T-cell (primary cell): ENCODE measurements at regions of chr12 and their contacts with region 1.

Region 1: DNA sequence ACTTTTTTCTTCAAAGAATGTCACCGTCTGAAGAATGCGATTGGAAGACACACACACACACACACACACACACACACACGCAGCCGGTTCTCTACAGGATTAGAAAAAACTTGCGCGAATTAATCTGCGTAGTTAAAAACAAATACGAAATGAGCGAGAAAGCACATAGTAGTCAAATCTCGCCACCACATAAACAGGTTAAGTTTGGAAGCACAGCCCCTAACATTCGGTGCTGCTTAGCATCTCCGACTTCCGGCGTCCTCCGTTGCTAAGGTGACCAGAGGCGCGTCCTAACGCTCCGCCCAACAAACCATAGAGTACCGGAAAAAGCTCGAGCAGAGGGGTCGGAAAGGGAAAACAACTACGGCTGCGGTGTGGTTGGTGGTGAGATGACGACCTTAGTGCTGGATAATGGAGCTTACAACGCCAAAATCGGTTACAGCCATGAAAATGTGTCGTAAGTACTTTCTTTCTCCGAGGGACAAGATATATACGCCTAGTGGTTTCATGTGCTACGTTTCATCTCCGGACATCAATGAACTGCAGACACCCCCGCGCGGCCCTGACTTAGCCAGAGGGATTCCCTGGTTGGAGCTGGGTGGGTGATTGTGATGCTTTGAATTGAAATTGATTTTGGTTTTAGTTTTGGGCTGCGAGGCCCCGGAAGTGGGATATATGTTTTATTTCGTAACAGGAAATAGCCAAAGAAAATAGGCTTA is at the start of gene ACTR6:
- DNase-seq: peak; percentile 96 to 99 (median 98)
- ATAC-seq: peak; percentile 84 to 88 (median 86)
- H3K4me3 ChIP-seq: peak within 1 kb of the TSS; percentile 76 to 93
- H3K4me3 Mint-ChIP-seq: peak within 1 kb of the TSS; percentile 98 to 99 (median 99)
- H3K27ac ChIP-seq: peak within 1 kb of the TSS; percentile 93
- H3K27ac Mint-ChIP-seq: peak within 1 kb of the TSS; percentile 98 to 99
- H3K4me1 ChIP-seq: peaks cover 10 to 36% of the 10 kb centered on the region in 2 experiments
- H3K4me1 Mint-ChIP-seq: peaks cover 43 to 50% (median 43%) of the 10 kb centered on the region in 3 donors
- H3K27me3 ChIP-seq: no peaks in the 10 kb centered on the region
- H3K27me3 Mint-ChIP-seq: no peaks in the 10 kb centered on the region
- total RNA-seq, gene ACTR6: 28.8 to 39.2 (median 35.3) TPM

Region 2: DNA sequence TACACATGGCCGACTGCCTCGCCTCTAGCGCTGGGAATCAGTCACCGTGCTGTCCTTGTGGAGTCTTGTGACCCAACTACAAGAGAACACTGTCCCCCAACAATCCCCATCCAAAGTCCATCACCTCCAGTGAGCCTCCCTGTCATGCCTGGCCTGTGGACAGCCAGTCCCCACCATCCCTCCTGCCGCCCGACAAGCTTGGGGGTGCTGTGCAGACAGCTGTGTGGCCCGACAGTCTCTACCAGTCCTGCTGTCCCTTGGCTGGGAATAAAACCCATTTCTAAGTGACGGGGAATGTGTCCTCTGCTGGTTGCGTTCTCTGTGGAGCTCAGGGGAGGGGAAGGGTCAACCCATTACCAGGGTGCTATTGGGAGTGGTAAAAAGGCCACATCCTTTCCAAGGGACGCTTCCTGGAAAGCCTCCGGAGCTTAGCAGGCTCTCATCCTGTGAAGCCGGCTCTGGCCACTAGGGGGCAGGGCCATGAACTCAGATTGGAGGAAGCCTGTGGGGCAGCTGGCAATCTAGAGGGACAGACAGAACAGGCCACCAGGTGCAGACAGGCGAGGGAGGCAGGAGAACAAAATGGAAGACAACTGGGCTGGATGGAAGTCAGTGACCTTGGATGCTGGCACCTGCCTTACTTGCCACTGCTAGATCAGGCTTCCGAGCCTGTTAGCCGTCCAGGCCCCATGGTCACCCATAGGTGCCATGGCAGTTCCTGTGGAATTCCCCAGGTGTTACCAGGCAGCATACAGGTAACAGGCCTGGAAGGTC is 46.0 kb before region 1 on chr12:
- CTCF ChIA-PET with region 1: interaction called, 5 to 10 read pairs
- POLR2A ChIA-PET with region 1: no interaction called
- DNase-seq: peak; percentile 18 to 76 (median 58)
- ATAC-seq: peak; percentile 66 to 76 (median 72)
- H3K4me3 ChIP-seq: no peak overlapping the region
- H3K4me3 Mint-ChIP-seq: no peak overlapping the region
- H3K27ac ChIP-seq: no peak overlapping the region
- H3K27ac Mint-ChIP-seq: no peak overlapping the region
- H3K4me1 ChIP-seq: peaks cover 0 to 8% of the 10 kb centered on the region in 2 experiments
- H3K4me1 Mint-ChIP-seq: peaks cover 0 to 6% (median 5%) of the 10 kb centered on the region in 3 donors
- H3K27me3 ChIP-seq: peaks cover 0 to 2% of the 10 kb centered on the region in 2 experiments
- H3K27me3 Mint-ChIP-seq: no peaks in the 10 kb centered on the region

Region 3: GRCh38 chr12:100163416-100164152 is 37.0 kb before region 1 on chr12:
- CTCF ChIA-PET with region 1: interaction called in 1 of 2 experiments, 10 read pairs
- POLR2A ChIA-PET with region 1: no interaction called
- DNase-seq: peak; percentile 36 to 78 (median 62)
- ATAC-seq: peak; percentile 99 to 100 (median 100)
- H3K4me3 ChIP-seq: peak overlapping the region in 1 of 2 donors; percentile 32
- H3K4me3 Mint-ChIP-seq: peak overlapping the region; percentile 57 to 62 (median 61)
- H3K27ac ChIP-seq: no peak overlapping the region
- H3K27ac Mint-ChIP-seq: no peak overlapping the region
- H3K4me1 ChIP-seq: peaks cover 0 to 5% of the 10 kb centered on the region in 2 experiments
- H3K4me1 Mint-ChIP-seq: peaks cover 10 to 12% (median 11%) of the 10 kb centered on the region in 3 donors
- H3K27me3 ChIP-seq: no peaks in the 10 kb centered on the region
- H3K27me3 Mint-ChIP-seq: no peaks in the 10 kb centered on the region

Region 4: GRCh38 chr12:100229058-100229637 is 28.5 kb after region 1 on chr12:
- CTCF ChIA-PET with region 1: no interaction called
- POLR2A ChIA-PET with region 1: no interaction called
- DNase-seq: no peak
- ATAC-seq: peak in 1 of 4 experiments; percentile 38
- H3K4me3 ChIP-seq: no peak overlapping the region
- H3K4me3 Mint-ChIP-seq: no peak overlapping the region
- H3K27ac ChIP-seq: no peak overlapping the region
- H3K27ac Mint-ChIP-seq: no peak overlapping the region
- H3K4me1 ChIP-seq: no peaks in the 10 kb centered on the region
- H3K4me1 Mint-ChIP-seq: no peaks in the 10 kb centered on the region
- H3K27me3 ChIP-seq: no peaks in the 10 kb centered on the region
- H3K27me3 Mint-ChIP-seq: no peaks in the 10 kb centered on the region

Region 5: DNA sequence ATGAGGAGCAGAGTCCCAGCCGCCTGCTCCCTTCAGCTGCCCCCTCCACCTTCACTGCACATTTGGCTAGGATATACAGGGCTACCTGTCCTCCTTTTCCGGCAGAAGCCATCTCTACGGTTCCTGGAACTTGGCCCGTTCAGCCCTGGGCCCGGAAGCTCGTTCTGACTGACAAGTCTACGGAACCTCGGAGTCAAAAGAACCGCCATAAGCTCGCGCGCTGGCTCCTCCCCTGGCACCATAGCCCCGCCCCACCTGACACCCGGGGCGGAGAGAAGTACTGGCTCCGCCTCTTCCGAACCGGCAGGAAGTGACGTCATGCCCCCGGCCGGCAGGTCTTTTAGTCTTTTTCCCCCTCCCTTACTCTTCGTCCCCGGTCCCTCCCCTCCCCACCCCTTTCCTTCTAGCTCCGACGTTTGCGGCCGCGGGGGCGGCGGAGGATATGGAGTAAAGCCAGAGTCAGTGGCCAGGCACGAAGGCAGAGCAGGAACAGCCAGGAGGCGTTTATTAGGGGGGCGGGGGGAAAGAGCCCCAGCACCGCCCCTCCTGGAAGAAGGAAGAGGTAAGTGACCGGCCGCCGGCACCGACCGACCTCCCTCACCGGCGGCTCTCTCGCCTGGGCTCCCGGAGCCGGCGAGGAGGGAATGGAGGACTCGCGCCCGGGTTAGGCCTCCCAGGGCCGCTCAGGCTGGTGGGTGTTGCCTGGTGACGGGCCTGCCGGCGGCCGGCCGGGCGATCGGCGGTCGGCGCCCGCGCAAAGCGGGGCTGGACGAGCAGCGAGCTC is 66.4 kb after region 1 on chr12 and contains the starts of genes DEPDC4 and SCYL2:
- CTCF ChIA-PET with region 1: interaction called, 4 to 11 read pairs
- POLR2A ChIA-PET with region 1: interaction called in 1 of 2 experiments, 7 read pairs
- DNase-seq: peak; percentile 81 to 97 (median 90)
- ATAC-seq: peak; percentile 90 to 95 (median 94)
- H3K4me3 ChIP-seq: peak within 1 kb of the TSS; percentile 80 to 93
- H3K4me3 Mint-ChIP-seq: peak within 1 kb of the TSS; percentile 97 to 99 (median 98)
- H3K27ac ChIP-seq: peak within 1 kb of the TSS; percentile 89
- H3K27ac Mint-ChIP-seq: peak within 1 kb of the TSS; percentile 94 to 98
- H3K4me1 ChIP-seq: peaks cover 10 to 18% of the 10 kb centered on the region in 2 experiments
- H3K4me1 Mint-ChIP-seq: peaks cover 34 to 45% (median 38%) of the 10 kb centered on the region in 3 donors
- H3K27me3 ChIP-seq: no peaks in the 10 kb centered on the region
- H3K27me3 Mint-ChIP-seq: no peaks in the 10 kb centered on the region
- total RNA-seq, gene DEPDC4: 0.38 to 0.93 (median 0.61) TPM in 4 of 5 donors, not detected in the other
- total RNA-seq, gene SCYL2: 33.1 to 43.4 (median 36.7) TPM

Region 6: DNA sequence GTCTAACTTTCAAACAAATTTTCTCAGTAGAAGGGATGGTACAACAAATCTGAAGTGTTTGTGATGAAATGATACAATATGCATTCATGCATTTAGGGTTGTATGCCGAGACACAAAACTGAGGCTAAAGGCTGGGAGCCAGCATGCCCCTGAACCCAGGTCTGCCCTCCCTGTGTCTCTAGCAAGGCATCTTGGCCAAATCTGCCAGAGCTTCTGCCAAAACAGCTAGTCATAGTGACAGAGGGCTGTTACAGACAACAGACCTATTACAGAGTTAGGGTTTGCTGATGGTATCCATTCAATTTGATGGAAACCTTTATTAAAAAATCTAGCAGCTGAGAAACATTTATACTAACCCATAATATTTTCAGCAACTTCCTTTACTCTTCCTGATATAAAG is 1485.6 kb after region 1 on chr12:
- CTCF ChIA-PET with region 1: no interaction called
- POLR2A ChIA-PET with region 1: interaction called in 1 of 2 experiments, 19 read pairs
- DNase-seq: no peak
- ATAC-seq: no peak
- H3K4me3 ChIP-seq: no peak overlapping the region
- H3K4me3 Mint-ChIP-seq: no peak overlapping the region
- H3K27ac ChIP-seq: no peak overlapping the region
- H3K27ac Mint-ChIP-seq: no peak overlapping the region
- H3K4me1 ChIP-seq: no peaks in the 10 kb centered on the region
- H3K4me1 Mint-ChIP-seq: no peaks in the 10 kb centered on the region
- H3K27me3 ChIP-seq: peaks cover 0 to 3% of the 10 kb centered on the region in 2 experiments
- H3K27me3 Mint-ChIP-seq: peaks cover 9 to 11% of the 10 kb centered on the region in 2 donors